MCF 10A (cell line): ENCODE measurements at regions of chr11 and their contacts with region 1.

Region 1: GRCh38 chr11:123690485-123690884 is 36.1 kb upstream of the SCN3B start:
- DNase-seq: peak; percentile 61
- H3K4me3 Mint-ChIP-seq: no peak overlapping the region
- H3K27ac Mint-ChIP-seq: peak overlapping the region; percentile 13
- H3K4me1 Mint-ChIP-seq: peaks cover 5% of the 10 kb centered on the region
- H3K27me3 Mint-ChIP-seq: no peaks in the 10 kb centered on the region
- CTCF ChIP-seq: no peak

Region 2: GRCh38 chr11:123654566-123655081 is 35.9 kb before region 1 on chr11 and contains the start of gene SCN3B:
- CTCF ChIA-PET with region 1: interaction called, 6 read pairs
- POLR2A ChIA-PET with region 1: interaction called, 3 read pairs
- intact Hi-C with region 1: loop called (anchors 2 kb)
- DNase-seq: peak; percentile 67
- H3K4me3 Mint-ChIP-seq: peak within 1 kb of the TSS; percentile 68
- H3K27ac Mint-ChIP-seq: no peak within 1 kb of the TSS
- H3K4me1 Mint-ChIP-seq: no peaks in the 10 kb centered on the region
- H3K27me3 Mint-ChIP-seq: peaks cover 39% of the 10 kb centered on the region
- CTCF ChIP-seq: no peak
- total RNA-seq, gene SCN3B: 1.2 and 3.3 TPM in 2 replicates